ENCODE measurements at regions of chr10 and their contacts with region 1.

Region 1: DNA sequence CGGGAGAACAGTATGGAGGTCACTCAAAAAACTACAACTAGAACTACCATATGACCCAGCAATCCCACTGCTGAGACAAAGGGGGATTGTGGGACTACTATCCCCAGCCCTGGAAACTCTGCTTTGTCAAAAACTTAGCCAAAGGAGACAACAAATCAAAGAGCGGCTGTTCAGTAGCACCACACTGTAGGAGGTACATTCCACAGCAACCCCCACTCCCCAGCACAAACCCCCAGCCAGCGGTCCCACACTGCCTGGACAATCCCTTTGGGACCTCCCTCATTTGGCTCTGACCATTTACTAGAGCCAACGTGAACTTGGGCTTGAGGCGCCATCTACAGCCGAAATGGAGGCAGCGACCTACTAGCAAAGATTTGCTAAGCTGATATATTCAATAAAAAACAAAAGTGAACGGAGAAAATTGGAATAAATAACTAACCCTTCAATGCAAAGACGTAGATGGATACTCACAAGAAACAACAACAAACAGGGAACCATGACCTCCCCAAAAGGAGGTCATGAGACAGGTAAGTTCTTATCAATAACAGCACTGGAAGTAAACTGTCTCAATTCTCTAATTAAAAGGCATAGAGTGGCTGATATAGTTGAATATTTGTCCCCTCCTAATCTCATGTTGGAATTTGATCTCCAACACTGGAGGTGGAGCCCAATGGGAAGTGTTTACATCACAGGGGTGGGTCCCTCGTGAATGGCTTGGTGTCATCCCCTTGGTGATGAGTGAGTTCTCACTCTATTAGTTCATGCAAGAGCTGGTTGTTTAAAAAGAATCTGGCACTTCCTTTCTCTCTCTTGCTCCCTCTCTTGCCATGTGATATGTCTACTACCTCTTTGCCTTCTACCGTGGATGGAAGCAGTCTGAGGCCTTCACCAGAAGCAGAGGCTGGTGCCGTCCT is 119.0 kb upstream of the KCNMA1 start:
- DNase-seq: peak; percentile 40
- H3K4me3 Mint-ChIP-seq: no peak overlapping the region
- H3K27ac Mint-ChIP-seq: no peak overlapping the region
- H3K4me1 Mint-ChIP-seq: no peaks in the 10 kb centered on the region
- H3K27me3 Mint-ChIP-seq: peaks cover 2% of the 10 kb centered on the region

Region 2: DNA sequence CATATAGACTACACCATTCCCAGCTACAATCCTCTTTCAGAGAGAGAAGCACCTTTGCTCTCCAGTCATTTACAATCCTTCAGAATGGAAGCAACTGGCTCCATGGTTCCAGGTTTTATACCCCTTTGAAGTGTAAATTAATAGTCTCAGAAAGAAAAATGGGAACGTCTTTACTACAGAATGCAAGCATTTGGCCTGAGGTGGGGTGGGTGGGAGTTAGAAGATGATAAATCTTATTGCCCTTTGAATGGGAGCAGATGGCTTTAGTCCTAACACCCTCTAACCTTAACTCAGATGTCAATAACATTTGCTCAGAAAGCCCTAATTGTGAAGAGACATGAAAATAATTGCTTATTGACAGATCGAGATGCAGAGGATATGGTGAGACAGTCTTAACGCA is 34.8 kb before region 1 on chr10:
- CTCF ChIA-PET with region 1: interaction called, 10 read pairs
- POLR2A ChIA-PET with region 1: no interaction called
- intact Hi-C with region 1: loop called (anchors 5 kb)
- DNase-seq: no peak
- H3K4me3 Mint-ChIP-seq: no peak overlapping the region
- H3K27ac Mint-ChIP-seq: no peak overlapping the region
- H3K4me1 Mint-ChIP-seq: peaks cover 4% of the 10 kb centered on the region
- H3K27me3 Mint-ChIP-seq: peaks cover 4% of the 10 kb centered on the region

Region 3: DNA sequence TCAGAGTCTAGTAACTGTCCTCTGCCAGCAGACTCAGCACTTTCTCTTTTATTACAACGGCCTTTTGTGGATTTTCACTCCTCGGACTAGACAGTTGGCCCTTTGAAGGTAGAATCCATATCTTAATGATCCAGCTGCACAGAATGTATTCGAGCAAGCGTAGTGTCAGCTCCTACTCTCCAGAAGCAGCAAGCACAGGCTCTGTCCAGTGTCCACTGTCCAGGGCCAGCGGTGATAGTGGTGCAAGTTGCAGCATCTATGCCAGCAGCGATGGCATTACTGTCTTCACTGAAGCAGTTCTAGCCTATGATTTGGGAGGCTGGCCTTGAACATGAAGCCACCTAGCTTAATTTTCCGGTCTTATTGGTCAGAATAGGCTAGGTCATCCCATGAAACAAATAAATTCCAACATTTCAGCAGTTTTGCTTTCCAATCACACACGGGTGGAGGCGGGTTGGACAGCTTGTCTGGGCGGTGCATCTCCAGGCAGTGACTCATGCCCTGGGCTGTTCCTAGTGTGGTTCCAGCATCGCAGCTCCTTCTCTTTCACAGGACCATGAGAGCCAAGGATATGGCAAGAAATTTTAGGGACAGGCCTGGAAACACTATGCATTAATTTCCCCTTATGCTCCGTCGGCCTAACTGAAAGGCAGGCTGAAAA is 10.4 kb before region 1 on chr10:
- CTCF ChIA-PET with region 1: no interaction called
- POLR2A ChIA-PET with region 1: no interaction called
- intact Hi-C with region 1: no loop called
- DNase-seq: no peak
- H3K4me3 Mint-ChIP-seq: no peak overlapping the region
- H3K27ac Mint-ChIP-seq: no peak overlapping the region
- H3K4me1 Mint-ChIP-seq: no peaks in the 10 kb centered on the region
- H3K27me3 Mint-ChIP-seq: peaks cover 5% of the 10 kb centered on the region

Measured in activated CD4-positive, alpha-beta memory T cell treated with anti-CD3 and anti-CD28 coated beads for 36 hours (primary cell).